Naive thymus-derived CD4-positive, alpha-beta T cell (primary cell): ENCODE measurements at regions of chr9 and their contacts with region 1.

Region 1: GRCh38 chr9:89602978-89603766 is 1.6 kb upstream of the GADD45G start:
- DNase-seq: peak; percentile 74 to 88 (median 85)
- ATAC-seq: peak; percentile 55
- H3K4me3 ChIP-seq: peak overlapping the region; percentile 72
- H3K4me3 Mint-ChIP-seq: peak overlapping the region; percentile 79 to 92 (median 88)
- H3K27ac ChIP-seq: no peak overlapping the region
- H3K27ac Mint-ChIP-seq: peak overlapping the region in 7 of 9 donors; percentile 12 to 88 (median 62)
- H3K4me1 ChIP-seq: peaks cover 12 to 23% of the 10 kb centered on the region in 2 donors
- H3K4me1 Mint-ChIP-seq: peaks cover 0 to 34% (median 23%) of the 10 kb centered on the region in 7 donors
- H3K27me3 ChIP-seq: no peaks in the 10 kb centered on the region
- H3K27me3 Mint-ChIP-seq: peaks cover 0 to 21% (median 0%) of the 10 kb centered on the region in 5 donors

Region 2: DNA sequence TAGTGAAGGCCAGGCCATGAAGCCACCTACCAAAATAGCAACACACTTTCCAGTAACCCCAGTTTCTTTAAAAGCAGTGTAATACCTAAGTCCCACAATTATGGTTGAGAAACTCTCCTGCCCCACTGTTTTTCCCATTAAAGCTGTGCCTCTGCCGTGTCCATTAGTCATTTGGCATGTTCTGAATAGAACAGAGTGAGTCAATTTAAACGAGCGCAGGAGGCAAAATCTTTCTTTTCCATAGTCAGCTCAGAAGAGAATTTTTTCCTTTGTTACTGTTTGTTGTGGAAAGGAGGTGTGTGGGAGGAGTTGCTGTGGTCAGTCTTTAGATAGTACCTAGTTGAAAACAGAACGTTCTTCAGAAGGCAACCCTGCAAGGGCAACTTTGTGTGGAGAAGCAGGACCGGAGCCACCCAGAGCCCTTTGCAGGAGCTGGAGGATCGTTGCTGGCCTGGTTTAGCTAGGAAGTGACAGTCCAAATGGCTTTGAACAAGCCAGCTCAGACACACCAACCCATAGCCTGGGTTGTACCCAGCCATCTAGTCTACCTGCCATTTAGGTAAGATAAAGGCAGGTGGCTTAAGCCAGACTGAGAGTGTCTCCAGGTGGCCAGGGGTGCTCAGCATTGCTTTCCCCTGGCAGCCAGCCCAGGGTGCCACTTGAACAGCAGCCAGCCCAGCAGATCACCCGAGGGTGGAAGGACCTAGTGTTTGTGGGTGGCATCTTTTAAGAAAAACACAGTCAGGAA is 32.0 kb after region 1 on chr9:
- CTCF ChIA-PET with region 1: no interaction called
- POLR2A ChIA-PET with region 1: no interaction called
- intact Hi-C with region 1: no loop called
- DNase-seq: no peak
- ATAC-seq: no peak
- H3K4me3 ChIP-seq: no peak overlapping the region
- H3K4me3 Mint-ChIP-seq: no peak overlapping the region
- H3K27ac ChIP-seq: no peak overlapping the region
- H3K27ac Mint-ChIP-seq: no peak overlapping the region
- H3K4me1 ChIP-seq: no peaks in the 10 kb centered on the region
- H3K4me1 Mint-ChIP-seq: peaks cover 0 to 3% (median 0%) of the 10 kb centered on the region in 7 donors
- H3K27me3 ChIP-seq: no peaks in the 10 kb centered on the region
- H3K27me3 Mint-ChIP-seq: peaks cover 0 to 4% (median 0%) of the 10 kb centered on the region in 5 donors

Region 3: GRCh38 chr9:89661956-89662717 is 59.0 kb after region 1 on chr9:
- CTCF ChIA-PET with region 1: no interaction called
- POLR2A ChIA-PET with region 1: no interaction called
- intact Hi-C with region 1: loop called in 1 of 2 experiments (anchors 2 kb)
- DNase-seq: no peak
- ATAC-seq: peak; percentile 61
- H3K4me3 ChIP-seq: no peak overlapping the region
- H3K4me3 Mint-ChIP-seq: no peak overlapping the region
- H3K27ac ChIP-seq: no peak overlapping the region
- H3K27ac Mint-ChIP-seq: no peak overlapping the region
- H3K4me1 ChIP-seq: no peaks in the 10 kb centered on the region
- H3K4me1 Mint-ChIP-seq: peaks cover 0 to 39% (median 0%) of the 10 kb centered on the region in 7 donors
- H3K27me3 ChIP-seq: no peaks in the 10 kb centered on the region
- H3K27me3 Mint-ChIP-seq: peaks cover 0 to 17% (median 4%) of the 10 kb centered on the region in 5 donors

Region 4: GRCh38 chr9:89781838-89782517 is 178.8 kb after region 1 on chr9:
- CTCF ChIA-PET with region 1: no interaction called
- POLR2A ChIA-PET with region 1: no interaction called
- intact Hi-C with region 1: no loop called
- DNase-seq: no peak
- ATAC-seq: peak; percentile 74
- H3K4me3 ChIP-seq: no peak overlapping the region
- H3K4me3 Mint-ChIP-seq: no peak overlapping the region
- H3K27ac ChIP-seq: no peak overlapping the region
- H3K27ac Mint-ChIP-seq: peak overlapping the region in 1 of 9 donors; percentile 14
- H3K4me1 ChIP-seq: no peaks in the 10 kb centered on the region
- H3K4me1 Mint-ChIP-seq: peaks cover 0 to 6% (median 0%) of the 10 kb centered on the region in 7 donors
- H3K27me3 ChIP-seq: no peaks in the 10 kb centered on the region
- H3K27me3 Mint-ChIP-seq: peaks cover 0 to 46% (median 5%) of the 10 kb centered on the region in 5 donors

Region 5: DNA sequence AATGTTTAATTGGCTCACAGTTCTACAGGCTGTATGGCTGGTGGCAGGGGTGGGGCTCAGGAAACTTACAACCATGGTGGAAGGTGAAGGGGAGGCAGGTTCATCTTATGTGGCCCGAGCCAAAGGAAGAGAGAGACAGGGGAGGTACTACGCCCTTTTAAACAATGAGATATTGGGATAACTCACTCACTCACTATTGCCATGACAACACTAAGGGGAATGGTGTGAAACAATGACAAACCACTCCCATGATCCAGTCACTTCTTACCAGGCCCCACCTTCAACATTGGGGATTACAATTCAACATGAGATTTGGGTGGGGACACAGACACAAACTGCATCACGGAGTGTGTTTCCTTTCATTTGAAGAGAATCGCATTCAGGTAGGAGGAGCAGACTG is 222.5 kb after region 1 on chr9:
- CTCF ChIA-PET with region 1: no interaction called
- POLR2A ChIA-PET with region 1: no interaction called
- intact Hi-C with region 1: loop called in 1 of 2 experiments (anchors 2 kb)
- DNase-seq: no peak
- ATAC-seq: no peak
- H3K4me3 ChIP-seq: no peak overlapping the region
- H3K4me3 Mint-ChIP-seq: no peak overlapping the region
- H3K27ac ChIP-seq: no peak overlapping the region
- H3K27ac Mint-ChIP-seq: no peak overlapping the region
- H3K4me1 ChIP-seq: no peaks in the 10 kb centered on the region
- H3K4me1 Mint-ChIP-seq: peaks cover 12 to 26% (median 18%) of the 10 kb centered on the region in 7 donors
- H3K27me3 ChIP-seq: no peaks in the 10 kb centered on the region
- H3K27me3 Mint-ChIP-seq: peaks cover 0 to 8% (median 0%) of the 10 kb centered on the region in 5 donors

Region 6: GRCh38 chr9:89999534-90000370 is 396.6 kb after region 1 on chr9:
- CTCF ChIA-PET with region 1: no interaction called
- POLR2A ChIA-PET with region 1: no interaction called
- intact Hi-C with region 1: loop called (anchors 1 kb)
- DNase-seq: peak in 7 of 9 donors; percentile 15 to 59 (median 36)
- ATAC-seq: peak; percentile 79
- H3K4me3 ChIP-seq: peak overlapping the region; percentile 63
- H3K4me3 Mint-ChIP-seq: peak overlapping the region; percentile 69 to 86 (median 78)
- H3K27ac ChIP-seq: peak overlapping the region; percentile 49
- H3K27ac Mint-ChIP-seq: peak overlapping the region; percentile 63 to 90 (median 83)
- H3K4me1 ChIP-seq: peaks cover 10 to 20% of the 10 kb centered on the region in 2 donors
- H3K4me1 Mint-ChIP-seq: peaks cover 20 to 43% (median 27%) of the 10 kb centered on the region in 7 donors
- H3K27me3 ChIP-seq: no peaks in the 10 kb centered on the region
- H3K27me3 Mint-ChIP-seq: peaks cover 0 to 4% (median 0%) of the 10 kb centered on the region in 5 donors

Region 7: GRCh38 chr9:90142580-90142979 is 539.4 kb after region 1 on chr9:
- CTCF ChIA-PET with region 1: interaction called, 3 read pairs
- POLR2A ChIA-PET with region 1: no interaction called
- intact Hi-C with region 1: loop called (anchors 1 kb)
- DNase-seq: peak in 7 of 9 donors; percentile 17 to 64 (median 49)
- ATAC-seq: peak; percentile 49
- H3K4me3 ChIP-seq: no peak overlapping the region
- H3K4me3 Mint-ChIP-seq: no peak overlapping the region
- H3K27ac ChIP-seq: no peak overlapping the region
- H3K27ac Mint-ChIP-seq: no peak overlapping the region
- H3K4me1 ChIP-seq: no peaks in the 10 kb centered on the region
- H3K4me1 Mint-ChIP-seq: peaks cover 0 to 6% (median 5%) of the 10 kb centered on the region in 7 donors
- H3K27me3 ChIP-seq: no peaks in the 10 kb centered on the region
- H3K27me3 Mint-ChIP-seq: peaks cover 23 to 59% (median 28%) of the 10 kb centered on the region in 5 donors